Activated CD4-positive, alpha-beta T cell treated with anti-CD3 and anti-CD28 coated beads, Interleukin-2, amount 10 ng/mL, durations not matched to agents 24 days and 14 days (primary cell): ENCODE measurements at regions of chr17 and their contacts with region 1.

Region 1: DNA sequence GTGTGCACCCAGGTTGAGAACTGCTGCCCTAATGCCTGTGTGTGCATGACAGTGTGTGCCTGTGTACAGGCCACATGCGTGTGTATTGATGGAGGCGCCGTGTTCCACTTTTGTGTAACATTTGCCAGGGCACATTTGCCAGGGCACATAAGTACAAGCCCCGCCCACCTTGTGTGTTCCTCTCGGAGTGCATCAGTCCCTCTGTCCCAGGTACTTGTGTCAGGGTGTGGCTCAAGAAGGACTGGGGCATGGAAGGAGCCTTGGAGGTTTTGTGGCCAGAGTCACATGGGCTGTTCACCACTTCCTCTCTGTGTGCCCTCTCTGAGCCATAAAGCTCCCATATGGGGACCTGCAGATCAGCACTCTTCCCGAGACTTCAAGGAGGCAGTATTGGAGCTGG is 73.9 kb downstream of the MRM1 start:
- DNase-seq: peak; percentile 85
- H3K4me3 Mint-ChIP-seq: peak overlapping the region; percentile 75
- H3K27ac Mint-ChIP-seq: peak overlapping the region; percentile 79
- H3K4me1 Mint-ChIP-seq: peaks cover 51% of the 10 kb centered on the region
- H3K27me3 Mint-ChIP-seq: no peaks in the 10 kb centered on the region

Region 2: GRCh38 chr17:36703831-36704266 is 28.6 kb after region 1 on chr17:
- intact Hi-C with region 1: no loop called
- DNase-seq: peak; percentile 91
- H3K4me3 Mint-ChIP-seq: no peak overlapping the region
- H3K27ac Mint-ChIP-seq: no peak overlapping the region
- H3K4me1 Mint-ChIP-seq: no peaks in the 10 kb centered on the region
- H3K27me3 Mint-ChIP-seq: peaks cover 37% of the 10 kb centered on the region

Region 3: GRCh38 chr17:36722121-36722902 is 47.1 kb after region 1 on chr17:
- intact Hi-C with region 1: loop called (anchors 5 kb)
- DNase-seq: peak; percentile 96
- H3K4me3 Mint-ChIP-seq: peak overlapping the region; percentile 80
- H3K27ac Mint-ChIP-seq: peak overlapping the region; percentile 99
- H3K4me1 Mint-ChIP-seq: peaks cover 50% of the 10 kb centered on the region
- H3K27me3 Mint-ChIP-seq: no peaks in the 10 kb centered on the region